ENCODE measurements at regions of chr17 and their contacts with region 1.

Region 1: DNA sequence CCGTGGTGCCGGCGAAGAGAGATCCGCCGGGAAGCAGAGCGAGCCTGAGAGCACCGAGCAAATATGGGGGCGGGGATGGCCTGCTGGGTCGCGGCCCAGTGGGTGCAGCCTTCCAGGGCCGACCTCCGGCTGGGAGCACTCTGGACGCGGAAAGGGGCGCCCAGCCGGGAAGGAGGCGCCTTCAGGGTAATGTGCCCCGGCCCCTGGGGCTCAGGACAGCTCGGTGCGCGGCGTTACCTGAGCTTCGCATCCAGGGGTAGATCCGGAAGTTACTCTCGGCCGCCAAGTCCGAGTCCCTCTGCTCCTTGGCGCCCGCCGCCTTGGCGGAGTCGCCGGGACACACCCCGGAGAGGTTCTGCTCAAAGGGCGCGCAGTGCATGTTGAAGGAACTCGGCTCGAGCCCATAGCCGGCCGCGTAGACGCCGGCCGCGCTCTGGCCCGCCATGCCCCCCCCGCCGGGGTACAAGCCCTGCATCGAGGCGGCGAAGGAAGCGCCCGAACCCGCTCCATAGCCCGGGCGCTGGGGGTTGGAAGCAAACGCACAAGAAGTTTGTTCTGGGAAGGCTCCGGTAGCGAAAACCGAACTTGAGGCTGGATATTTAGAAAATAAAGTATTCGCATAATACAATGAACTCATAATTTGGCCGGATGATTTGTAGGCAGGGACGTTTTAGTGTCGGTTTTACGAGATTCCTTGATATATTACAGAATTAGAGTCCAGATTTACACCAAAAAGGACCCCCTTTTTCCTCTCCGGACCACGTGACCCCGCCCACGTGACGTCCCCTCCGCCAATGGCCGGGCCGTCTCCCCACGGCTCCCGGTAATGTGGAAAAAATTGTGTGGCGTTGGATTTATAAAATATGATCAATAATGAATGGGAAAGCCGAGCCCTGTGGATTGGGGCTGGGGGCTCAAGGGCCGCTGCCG is at the start of gene HOXB7:
- DNase-seq: peak; percentile 83
- ATAC-seq: peak; percentile 40
- H3K4me3 Mint-ChIP-seq: peak within 1 kb of the TSS; percentile 82
- H3K27ac Mint-ChIP-seq: peak within 1 kb of the TSS; percentile 58
- H3K4me1 Mint-ChIP-seq: peaks cover 37% of the 10 kb centered on the region
- H3K27me3 Mint-ChIP-seq: peaks cover 63% of the 10 kb centered on the region
- total RNA-seq, gene HOXB7: 0.25 to 0.30 TPM

Region 2: GRCh38 chr17:48522031-48522653 is 88.4 kb before region 1 on chr17:
- CTCF ChIA-PET with region 1: no interaction called
- POLR2A ChIA-PET with region 1: no interaction called
- intact Hi-C with region 1: no loop called
- DNase-seq: no peak
- ATAC-seq: no peak
- H3K4me3 Mint-ChIP-seq: no peak overlapping the region
- H3K27ac Mint-ChIP-seq: no peak overlapping the region
- H3K4me1 Mint-ChIP-seq: no peaks in the 10 kb centered on the region
- H3K27me3 Mint-ChIP-seq: peaks cover 46% of the 10 kb centered on the region

Region 3: GRCh38 chr17:48577946-48578615 is 32.5 kb before region 1 on chr17 and contains the start of gene HOXB4:
- CTCF ChIA-PET with region 1: interaction called, 3 read pairs
- POLR2A ChIA-PET with region 1: no interaction called
- intact Hi-C with region 1: loop called in 1 of 2 experiments (anchors 1 kb)
- DNase-seq: peak; percentile 80
- ATAC-seq: peak; percentile 72
- H3K4me3 Mint-ChIP-seq: peak within 1 kb of the TSS; percentile 81
- H3K27ac Mint-ChIP-seq: peak within 1 kb of the TSS; percentile 47
- H3K4me1 Mint-ChIP-seq: peaks cover 43% of the 10 kb centered on the region
- H3K27me3 Mint-ChIP-seq: peaks cover 52% of the 10 kb centered on the region
- total RNA-seq, gene HOXB4: 0.66 to 1.1 TPM

Region 4: DNA sequence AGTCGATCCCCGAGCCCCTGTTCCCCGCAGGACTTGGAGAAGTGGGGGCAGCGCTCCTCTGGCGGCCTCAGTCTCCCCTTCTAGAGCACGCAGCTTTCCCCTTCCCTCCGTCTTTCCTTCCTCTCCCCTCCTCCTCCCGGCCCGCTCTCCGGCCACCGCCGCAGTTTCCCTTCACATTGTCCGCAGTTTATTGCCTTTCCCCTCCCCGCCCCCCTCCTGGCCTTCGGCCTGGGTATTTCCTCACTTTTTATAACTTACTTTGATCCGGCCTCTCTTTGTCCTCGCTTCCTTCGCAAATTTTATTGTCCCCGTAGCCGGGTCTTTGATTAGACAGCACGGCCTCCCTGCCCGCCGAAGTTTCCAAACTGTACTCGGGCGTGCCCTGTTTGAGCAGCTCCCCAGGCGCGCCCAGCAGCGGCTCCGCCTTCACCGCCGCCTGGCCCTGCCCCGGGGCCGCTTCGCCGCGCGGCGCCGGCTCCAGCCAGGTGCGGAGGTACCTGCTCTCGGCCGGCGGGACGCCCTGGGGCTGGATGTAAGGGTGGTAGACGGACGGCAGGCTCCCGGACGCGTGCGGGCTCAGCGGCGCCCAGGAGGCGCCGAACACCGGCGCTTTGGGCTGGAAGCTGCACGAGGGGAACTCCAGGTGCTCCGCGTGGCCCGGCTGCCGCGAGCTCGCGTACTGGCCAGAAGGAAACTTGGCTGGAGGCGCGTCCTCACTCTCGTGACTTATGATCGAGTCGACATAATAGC is 15.1 kb after region 1 on chr17:
- CTCF ChIA-PET with region 1: interaction called, 11 read pairs
- POLR2A ChIA-PET with region 1: no interaction called
- intact Hi-C with region 1: loop called in 1 of 2 experiments (anchors 1 kb)
- DNase-seq: peak; percentile 63
- ATAC-seq: peak; percentile 73
- H3K4me3 Mint-ChIP-seq: peak overlapping the region; percentile 74
- H3K27ac Mint-ChIP-seq: peak overlapping the region; percentile 57
- H3K4me1 Mint-ChIP-seq: peaks cover 10% of the 10 kb centered on the region
- H3K27me3 Mint-ChIP-seq: peaks cover 75% of the 10 kb centered on the region

Region 5: DNA sequence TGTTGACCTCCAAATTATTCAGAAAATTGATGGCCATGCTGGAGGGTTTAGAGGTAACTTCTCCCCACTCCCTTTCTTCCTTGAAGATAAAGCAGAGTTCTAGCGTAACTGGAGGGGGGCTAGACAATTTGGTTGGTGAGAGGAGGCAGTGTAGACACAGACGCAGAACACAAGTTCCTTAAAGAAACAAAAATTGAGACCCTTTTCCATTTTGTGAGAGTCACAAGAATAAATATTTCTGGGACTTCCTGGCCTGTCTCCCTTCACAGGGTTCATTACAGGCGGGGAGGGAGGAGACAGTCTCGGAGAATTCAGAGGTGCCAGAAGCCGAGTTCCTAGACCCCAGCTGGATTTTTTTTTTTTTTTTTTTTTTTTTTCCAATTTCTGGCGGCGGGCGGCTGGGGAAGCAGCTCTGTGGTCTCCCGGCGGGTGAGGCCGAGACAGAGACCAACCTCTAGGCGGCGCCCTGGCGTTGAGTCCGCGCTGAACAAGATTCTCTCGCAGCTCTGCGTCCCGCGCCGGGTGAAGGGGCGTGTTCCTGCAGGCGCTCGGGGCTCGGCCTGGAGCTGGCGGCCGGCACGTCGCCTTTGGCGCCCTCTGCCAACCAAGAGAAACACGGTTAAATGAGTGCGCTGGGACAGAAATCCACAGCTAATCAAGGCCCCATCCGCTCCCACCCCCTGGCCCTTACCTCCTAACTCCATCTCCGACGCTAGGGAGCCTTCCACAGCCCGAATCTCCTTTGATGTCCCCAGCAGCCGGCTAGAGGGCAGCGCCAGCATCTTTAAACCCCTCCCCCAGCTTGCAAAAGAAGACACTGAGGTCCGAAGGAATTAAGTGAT is 25.9 kb after region 1 on chr17:
- CTCF ChIA-PET with region 1: interaction called, 10 read pairs
- POLR2A ChIA-PET with region 1: no interaction called
- intact Hi-C with region 1: no loop called
- DNase-seq: peak; percentile 91
- ATAC-seq: peak; percentile 95
- H3K4me3 Mint-ChIP-seq: no peak overlapping the region
- H3K27ac Mint-ChIP-seq: no peak overlapping the region
- H3K4me1 Mint-ChIP-seq: no peaks in the 10 kb centered on the region
- H3K27me3 Mint-ChIP-seq: peaks cover 74% of the 10 kb centered on the region

Region 6: GRCh38 chr17:48718761-48719641 is 108.5 kb after region 1 on chr17:
- CTCF ChIA-PET with region 1: interaction called, 9 read pairs
- POLR2A ChIA-PET with region 1: no interaction called
- intact Hi-C with region 1: loop called (anchors 2 to 5 kb)
- DNase-seq: peak; percentile 34
- ATAC-seq: no peak
- H3K4me3 Mint-ChIP-seq: peak overlapping the region; percentile 40
- H3K27ac Mint-ChIP-seq: no peak overlapping the region
- H3K4me1 Mint-ChIP-seq: peaks cover 25% of the 10 kb centered on the region
- H3K27me3 Mint-ChIP-seq: peaks cover 75% of the 10 kb centered on the region

Region 7: GRCh38 chr17:48816774-48817590 is 206.4 kb after region 1 on chr17 and contains the start of gene TTLL6:
- CTCF ChIA-PET with region 1: no interaction called
- POLR2A ChIA-PET with region 1: no interaction called
- intact Hi-C with region 1: no loop called
- DNase-seq: peak; percentile 80
- ATAC-seq: peak; percentile 93
- H3K4me3 Mint-ChIP-seq: peak within 1 kb of the TSS; percentile 63
- H3K27ac Mint-ChIP-seq: no peak within 1 kb of the TSS
- H3K4me1 Mint-ChIP-seq: peaks cover 15% of the 10 kb centered on the region
- H3K27me3 Mint-ChIP-seq: peaks cover 35% of the 10 kb centered on the region
- total RNA-seq, gene TTLL6: not detected

Measured in activated CD4-positive, alpha-beta T cell treated with anti-CD3 and anti-CD28 coated beads for 36 hours (primary cell).